ENCODE measurements at regions of chr5 and their contacts with region 1.

Region 1: GRCh38 chr5:96718635-96719077 is 56.5 kb downstream of the CAST start:
- DNase-seq: no peak
- H3K4me3 ChIP-seq: no peak overlapping the region
- H3K27ac ChIP-seq: no peak overlapping the region
- H3K4me1 ChIP-seq: 0 out of 7 replicates have a peak, but pooled peaks cover 0 to 4% (median 0%) of the 10 kb centered on the region in 4 experiments
- H3K27me3 ChIP-seq: no peaks in the 10 kb centered on the region
- CTCF ChIP-seq: no peak
- EP300 ChIP-seq: no peak
- POLR2A ChIP-seq: no peak
- RAD21 ChIP-seq: no peak

Region 2: GRCh38 chr5:96668725-96669124 is 49.9 kb before region 1 on chr5:
- CTCF ChIA-PET with region 1: no interaction called
- POLR2A ChIA-PET with region 1: no interaction called
- DNase-seq: no peak
- H3K4me3 ChIP-seq: no peak overlapping the region
- H3K27ac ChIP-seq: no peak overlapping the region
- H3K4me1 ChIP-seq: no peaks in the 10 kb centered on the region; a peak in 2 of 7 replicates
- H3K27me3 ChIP-seq: peaks cover 0 to 2% (median 0%) of the 10 kb centered on the region in 4 experiments; a peak in 2 of 7 replicates
- CTCF ChIP-seq: peak in 2 of 3 experiments; percentile 31 to 33; a peak in 2 of 4 replicates
- EP300 ChIP-seq: no peak
- POLR2A ChIP-seq: no peak
- RAD21 ChIP-seq: no peak

Region 3: DNA sequence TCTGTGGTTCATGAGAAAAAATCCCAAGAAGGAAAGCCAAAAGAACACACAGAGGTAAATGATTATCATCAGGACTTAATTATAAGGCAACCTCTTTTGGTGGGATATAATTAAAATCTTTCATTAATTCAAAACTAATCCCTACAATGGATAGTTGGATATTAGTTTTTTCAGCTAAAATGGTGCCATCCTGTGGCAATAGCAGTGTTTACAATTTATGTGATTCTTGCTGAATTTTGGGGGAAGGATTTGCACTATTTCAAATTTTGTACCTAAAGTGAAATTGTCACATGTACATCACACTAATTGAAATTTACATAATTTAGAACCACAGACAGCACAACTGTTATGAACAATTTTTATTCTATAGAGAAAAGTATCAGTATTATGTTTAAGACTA is 10.5 kb after region 1 on chr5:
- CTCF ChIA-PET with region 1: interaction called, 10 read pairs
- POLR2A ChIA-PET with region 1: interaction called, 3 read pairs
- DNase-seq: no peak
- H3K4me3 ChIP-seq: no peak overlapping the region
- H3K27ac ChIP-seq: no peak overlapping the region
- H3K4me1 ChIP-seq: peaks cover 0 to 2% (median 1%) of the 10 kb centered on the region in 4 experiments; a peak in 2 of 7 replicates
- H3K27me3 ChIP-seq: no peaks in the 10 kb centered on the region
- CTCF ChIP-seq: peak in 1 of 3 experiments; percentile 8; a peak in 1 of 4 replicates
- EP300 ChIP-seq: no peak
- POLR2A ChIP-seq: no peak
- RAD21 ChIP-seq: peak in 1 of 2 experiments; percentile 30; a peak in 2 of 4 replicates

Region 4: DNA sequence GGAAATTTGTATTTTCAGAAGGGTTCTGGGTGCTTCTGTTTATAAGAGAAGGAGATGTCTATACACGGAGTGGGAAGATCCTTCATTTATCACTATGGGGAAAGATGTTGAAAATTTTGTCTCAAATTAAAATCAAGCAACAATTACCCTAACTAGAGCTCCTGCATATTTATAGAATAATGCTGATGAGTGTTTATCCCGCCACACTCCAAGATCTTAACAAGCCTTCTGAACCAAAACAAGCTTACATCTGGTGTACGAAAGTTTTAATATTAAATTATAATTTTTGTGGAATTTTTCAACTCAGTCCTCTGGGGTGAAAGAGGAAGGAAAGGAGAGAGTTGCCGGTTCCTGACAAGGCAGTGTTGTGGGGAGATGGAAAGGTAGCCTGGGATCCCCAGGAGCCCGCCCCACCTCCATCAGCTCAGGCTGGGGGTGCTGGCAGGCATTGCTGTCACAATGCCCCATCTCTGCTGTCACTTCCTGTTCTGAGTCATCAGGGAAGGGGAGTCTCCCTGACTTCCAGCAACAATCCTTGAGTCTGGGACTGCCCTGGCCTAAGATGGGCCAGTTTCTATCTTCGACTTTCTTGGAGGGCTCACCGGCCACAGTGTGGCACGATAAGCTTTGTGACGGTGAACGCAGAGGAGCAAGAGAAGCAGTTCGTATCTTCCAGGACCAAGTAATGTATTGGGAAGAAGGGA is 24.6 kb after region 1 on chr5:
- CTCF ChIA-PET with region 1: interaction called, 16 read pairs
- POLR2A ChIA-PET with region 1: no interaction called
- DNase-seq: no peak
- H3K4me3 ChIP-seq: no peak overlapping the region
- H3K27ac ChIP-seq: no peak overlapping the region
- H3K4me1 ChIP-seq: no peaks in the 10 kb centered on the region; a peak in 1 of 7 replicates
- H3K27me3 ChIP-seq: no peaks in the 10 kb centered on the region
- CTCF ChIP-seq: no peak
- EP300 ChIP-seq: no peak
- POLR2A ChIP-seq: no peak
- RAD21 ChIP-seq: no peak

Region 5: DNA sequence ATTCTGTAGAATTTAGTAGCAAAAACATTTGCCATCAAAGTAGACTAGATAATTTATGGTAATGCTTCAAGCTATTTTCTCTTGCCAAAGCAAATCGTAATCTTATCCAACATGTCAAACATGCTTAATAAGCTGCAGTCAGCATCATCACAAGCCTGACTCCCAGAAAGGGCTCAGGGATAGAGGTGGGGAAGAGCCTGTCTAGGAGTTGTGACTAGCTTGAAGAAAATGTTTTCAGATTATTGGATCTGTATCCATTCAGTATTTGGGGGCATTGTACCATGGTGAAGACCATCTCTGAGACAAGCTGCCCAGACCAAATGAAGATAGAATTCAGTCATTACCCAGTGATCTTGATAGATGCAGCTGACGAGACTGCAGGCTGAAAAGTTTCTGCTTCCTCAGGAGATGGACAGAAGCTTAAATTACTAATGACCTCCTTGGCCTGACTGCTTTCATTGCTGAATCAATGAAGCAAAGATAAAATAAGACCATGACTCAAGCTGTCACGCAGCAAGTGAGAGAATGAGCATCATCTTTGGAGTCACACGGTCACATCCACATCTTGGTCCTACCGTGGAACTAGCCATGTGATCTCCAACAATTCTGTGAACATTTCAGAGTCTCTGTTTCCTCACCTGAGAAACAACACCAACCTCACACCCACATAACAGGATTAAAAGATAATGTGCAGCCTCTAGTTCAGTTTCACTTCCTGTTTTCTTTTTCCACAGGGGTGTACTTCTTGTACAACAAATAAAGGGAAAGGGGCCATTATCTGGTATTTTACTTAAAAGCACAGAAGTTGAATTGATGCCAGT is 167.1 kb after region 1 on chr5:
- CTCF ChIA-PET with region 1: no interaction called
- POLR2A ChIA-PET with region 1: no interaction called
- DNase-seq: no peak
- H3K4me3 ChIP-seq: no peak overlapping the region
- H3K27ac ChIP-seq: no peak overlapping the region
- H3K4me1 ChIP-seq: no peaks in the 10 kb centered on the region
- H3K27me3 ChIP-seq: no peaks in the 10 kb centered on the region
- CTCF ChIP-seq: no peak
- EP300 ChIP-seq: no peak
- POLR2A ChIP-seq: no peak
- RAD21 ChIP-seq: no peak

Region 6: GRCh38 chr5:96896806-96897205 is 178.2 kb after region 1 on chr5:
- CTCF ChIA-PET with region 1: no interaction called
- POLR2A ChIA-PET with region 1: no interaction called
- DNase-seq: no peak
- H3K4me3 ChIP-seq: no peak overlapping the region
- H3K27ac ChIP-seq: no peak overlapping the region
- H3K4me1 ChIP-seq: no peaks in the 10 kb centered on the region
- H3K27me3 ChIP-seq: no peaks in the 10 kb centered on the region
- CTCF ChIP-seq: no peak
- EP300 ChIP-seq: no peak
- POLR2A ChIP-seq: no peak
- RAD21 ChIP-seq: no peak

Measured in H1 (cell line).